Tibial artery (tissue), 4 donors: ENCODE measurements at regions of chr20 and their contacts with region 1.

Region 1: DNA sequence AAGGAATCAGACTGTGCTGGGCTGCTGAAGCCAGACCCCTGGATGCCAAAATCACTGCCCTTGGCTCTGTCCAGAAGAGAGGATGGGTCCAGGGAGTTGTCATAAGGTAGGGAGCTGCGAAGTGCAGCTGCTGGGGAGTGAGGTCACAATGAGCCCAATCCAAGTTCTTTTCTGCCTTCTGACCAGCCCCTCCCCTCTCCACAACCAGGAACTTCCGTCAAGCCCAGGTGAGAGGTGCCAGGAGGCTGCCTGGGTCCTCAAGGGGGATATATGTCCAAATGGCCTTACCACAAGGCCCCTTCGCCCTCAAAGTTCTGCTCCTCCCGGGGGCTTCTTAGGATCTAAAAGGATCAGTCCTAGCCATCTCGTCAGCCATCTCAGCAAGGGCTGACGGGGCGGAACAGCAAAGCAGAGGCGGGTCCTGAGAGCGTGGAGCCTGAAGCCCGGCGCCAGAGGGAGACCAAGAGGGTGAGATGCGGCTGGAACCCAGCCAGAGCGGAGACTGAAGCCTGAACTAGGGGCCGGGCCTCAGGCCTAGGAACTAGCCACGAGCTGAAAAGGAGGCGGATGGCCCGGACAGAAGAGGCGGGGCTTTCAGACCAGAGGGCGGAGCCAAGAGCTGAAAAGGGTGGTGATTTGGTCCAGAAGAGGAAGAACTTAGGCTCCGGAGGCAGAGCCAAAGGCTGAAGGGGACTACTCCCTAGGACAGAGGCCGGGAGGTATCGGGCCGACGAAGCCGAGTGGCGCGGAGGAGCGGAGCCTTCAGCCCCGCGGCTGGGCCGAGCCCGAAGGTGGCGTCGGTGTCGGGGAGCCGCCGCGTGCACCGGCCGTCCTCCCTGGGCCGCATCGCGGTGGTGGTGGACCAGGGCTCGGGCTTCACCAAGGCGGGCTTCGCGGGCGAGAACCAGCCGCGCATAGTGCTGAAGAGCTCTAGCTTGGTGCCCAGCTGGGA is at the start of gene ACTL10:
- DNase-seq: peak; percentile 99 to 100
- H3K4me3 ChIP-seq: peak within 1 kb of the TSS; percentile 60 to 69
- H3K27ac ChIP-seq: peak within 1 kb of the TSS; percentile 88 to 90
- H3K4me1 ChIP-seq: peaks cover 0 to 71% (median 52%) of the 10 kb centered on the region in 4 donors
- H3K27me3 ChIP-seq: no peaks in the 10 kb centered on the region
- CTCF ChIP-seq: peak; percentile 29 to 39

Region 2: GRCh38 chr20:33450867-33451266 is 215.7 kb before region 1 on chr20:
- intact Hi-C with region 1: loop called (anchors 10 kb)
- DNase-seq: peak in 1 of 2 donors; percentile 70
- H3K4me3 ChIP-seq: no peak overlapping the region
- H3K27ac ChIP-seq: no peak overlapping the region
- H3K4me1 ChIP-seq: no peaks in the 10 kb centered on the region
- H3K27me3 ChIP-seq: no peaks in the 10 kb centered on the region
- CTCF ChIP-seq: no peak

Region 3: GRCh38 chr20:33489495-33490022 is 177.0 kb before region 1 on chr20:
- intact Hi-C with region 1: loop called (anchors 10 kb)
- DNase-seq: peak; percentile 99 to 100
- H3K4me3 ChIP-seq: peak overlapping the region; percentile 79 to 88
- H3K27ac ChIP-seq: peak overlapping the region; percentile 86 to 93
- H3K4me1 ChIP-seq: peaks cover 0 to 20% (median 13%) of the 10 kb centered on the region in 4 donors
- H3K27me3 ChIP-seq: no peaks in the 10 kb centered on the region
- CTCF ChIP-seq: no peak

Region 4: DNA sequence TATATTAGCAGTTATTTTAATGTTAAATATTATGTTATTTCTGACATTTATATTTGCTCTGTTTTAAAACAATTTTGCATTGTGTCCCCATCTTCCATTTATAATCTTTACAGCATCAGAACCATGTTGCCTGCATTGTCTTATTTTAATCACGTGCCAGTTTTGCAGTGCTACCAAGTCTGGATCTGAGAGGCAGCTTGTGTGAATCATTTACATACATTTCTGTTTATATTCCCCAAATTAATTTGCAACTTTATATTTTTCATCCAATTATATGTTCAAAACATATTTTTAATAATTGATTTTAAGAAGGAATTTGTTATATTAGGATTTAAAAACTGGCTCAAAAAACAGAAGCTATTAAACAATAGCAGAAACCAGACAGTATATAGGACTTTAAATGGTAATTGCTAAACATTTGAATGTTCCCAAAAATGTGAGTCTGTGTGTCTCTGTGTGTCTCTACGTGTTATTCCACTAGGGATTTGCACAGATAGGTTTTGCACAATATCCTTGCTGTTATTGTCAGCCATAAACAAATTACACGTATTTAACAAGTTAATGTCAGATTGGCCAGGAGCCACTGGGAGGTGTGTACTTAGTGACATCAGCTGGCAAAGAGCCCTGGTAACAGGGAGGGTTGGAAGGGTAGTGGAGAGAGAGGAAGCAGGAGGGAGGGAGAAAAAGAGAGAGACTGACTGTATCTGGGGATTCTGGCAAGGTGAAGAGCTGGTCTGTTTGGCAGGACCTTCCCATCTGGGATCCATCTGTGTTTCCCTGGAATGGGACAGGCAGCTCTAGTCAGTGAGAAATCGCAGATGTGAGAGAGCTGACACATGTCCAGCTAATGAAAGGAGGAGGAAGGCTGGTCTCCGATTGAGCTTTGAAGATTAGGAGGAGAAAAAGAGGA is 104.6 kb before region 1 on chr20:
- intact Hi-C with region 1: loop called (anchors 5 kb)
- DNase-seq: peak; percentile 61 to 72
- H3K4me3 ChIP-seq: peak overlapping the region in 1 of 2 donors; percentile 8
- H3K27ac ChIP-seq: peak overlapping the region; percentile 46 to 64
- H3K4me1 ChIP-seq: peaks cover 0 to 20% (median 4%) of the 10 kb centered on the region in 4 donors
- H3K27me3 ChIP-seq: no peaks in the 10 kb centered on the region
- CTCF ChIP-seq: no peak